ENCODE measurements at regions of chr1 and their contacts with region 1.

Region 1: GRCh38 chr1:91165033-91165654 is 143.3 kb upstream of the ZNF644 start:
- H3K4me3 ChIP-seq: no peak overlapping the region
- H3K27ac ChIP-seq: no peak overlapping the region
- H3K4me1 ChIP-seq: no peaks in the 10 kb centered on the region
- CTCF ChIP-seq: peak; percentile 76

Region 2: GRCh38 chr1:90114521-90115141 is 1050.5 kb before region 1 on chr1:
- CTCF ChIA-PET with region 1: interaction called, 13 read pairs
- POLR2A ChIA-PET with region 1: no interaction called
- H3K4me3 ChIP-seq: no peak overlapping the region
- H3K27ac ChIP-seq: no peak overlapping the region
- H3K4me1 ChIP-seq: no peaks in the 10 kb centered on the region
- CTCF ChIP-seq: peak; percentile 37

Region 3: GRCh38 chr1:90936061-90936460 is 229.1 kb before region 1 on chr1:
- CTCF ChIA-PET with region 1: interaction called, 11 read pairs
- POLR2A ChIA-PET with region 1: no interaction called
- H3K4me3 ChIP-seq: no peak overlapping the region
- H3K27ac ChIP-seq: no peak overlapping the region
- H3K4me1 ChIP-seq: no peaks in the 10 kb centered on the region
- CTCF ChIP-seq: no peak

Region 4: DNA sequence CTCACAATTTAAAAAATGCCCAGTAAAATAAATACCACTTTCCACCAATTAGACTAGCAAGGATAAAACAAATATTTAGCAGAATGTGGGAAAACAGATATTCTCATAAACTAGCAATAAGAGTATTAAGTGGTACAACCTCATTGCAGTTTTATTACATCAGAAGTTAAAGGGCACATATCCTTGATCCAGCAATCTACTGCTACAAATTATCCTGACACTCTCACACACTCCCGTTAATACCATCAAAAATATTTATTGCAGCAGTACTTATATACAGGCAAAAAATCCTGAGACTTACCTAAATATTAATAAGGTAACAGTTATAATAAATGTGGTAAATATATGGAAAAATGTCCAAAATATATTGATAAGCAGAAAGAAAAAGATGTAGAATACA is 187.6 kb before region 1 on chr1:
- CTCF ChIA-PET with region 1: interaction called, 20 read pairs
- POLR2A ChIA-PET with region 1: no interaction called
- H3K4me3 ChIP-seq: no peak overlapping the region
- H3K27ac ChIP-seq: no peak overlapping the region
- H3K4me1 ChIP-seq: no peaks in the 10 kb centered on the region
- CTCF ChIP-seq: no peak

Region 5: GRCh38 chr1:91141858-91142257 is 23.3 kb before region 1 on chr1:
- CTCF ChIA-PET with region 1: interaction called, 14 read pairs
- POLR2A ChIA-PET with region 1: no interaction called
- H3K4me3 ChIP-seq: no peak overlapping the region
- H3K27ac ChIP-seq: no peak overlapping the region
- H3K4me1 ChIP-seq: no peaks in the 10 kb centered on the region
- CTCF ChIP-seq: no peak

Region 6: GRCh38 chr1:91273875-91274274 is 108.7 kb after region 1 on chr1:
- CTCF ChIA-PET with region 1: interaction called, 187 read pairs
- POLR2A ChIA-PET with region 1: no interaction called
- H3K4me3 ChIP-seq: no peak overlapping the region
- H3K27ac ChIP-seq: no peak overlapping the region
- H3K4me1 ChIP-seq: no peaks in the 10 kb centered on the region
- CTCF ChIP-seq: no peak

Region 7: DNA sequence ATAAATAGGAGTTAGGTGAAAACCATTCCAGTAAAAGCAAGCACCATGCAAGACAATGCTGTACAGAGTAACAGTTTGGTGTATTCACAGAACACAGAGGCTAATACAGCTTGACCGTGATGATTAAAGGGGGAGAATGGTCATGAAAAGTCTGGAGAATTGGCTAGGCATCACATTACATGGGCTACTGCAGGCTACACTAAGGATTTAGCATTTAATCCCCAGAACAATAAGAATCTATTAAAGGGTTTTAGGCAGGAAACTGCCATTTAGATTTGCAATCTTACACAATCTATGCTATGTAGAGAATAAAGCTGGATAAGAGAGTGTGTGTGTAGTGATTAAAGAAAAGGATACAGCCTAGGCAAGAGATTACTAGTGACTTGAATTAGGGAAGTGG is 208.9 kb after region 1 on chr1:
- CTCF ChIA-PET with region 1: no interaction called
- POLR2A ChIA-PET with region 1: no interaction called
- H3K4me3 ChIP-seq: no peak overlapping the region
- H3K27ac ChIP-seq: no peak overlapping the region
- H3K4me1 ChIP-seq: no peaks in the 10 kb centered on the region
- CTCF ChIP-seq: no peak

Region 8: DNA sequence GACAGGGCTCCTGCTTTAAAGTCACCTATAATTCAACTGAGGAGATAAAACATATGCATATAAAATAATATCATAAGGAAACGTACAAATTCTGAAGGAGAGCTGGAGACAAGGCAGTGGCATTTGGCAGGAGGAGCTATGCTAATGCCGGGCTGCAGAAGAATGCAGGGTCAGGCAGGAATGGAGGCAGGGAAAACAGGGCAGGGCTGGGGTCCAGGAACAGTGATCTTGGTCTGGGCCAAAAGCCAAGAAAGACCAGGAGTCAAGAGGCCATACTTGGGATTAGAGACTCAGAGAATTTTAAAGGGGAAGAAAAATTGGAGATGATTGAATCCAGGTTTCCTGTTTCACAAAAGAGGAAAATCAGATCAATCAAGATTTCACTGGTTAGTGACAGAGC is 764.1 kb after region 1 on chr1:
- CTCF ChIA-PET with region 1: interaction called, 10 read pairs
- POLR2A ChIA-PET with region 1: no interaction called
- H3K4me3 ChIP-seq: no peak overlapping the region
- H3K27ac ChIP-seq: no peak overlapping the region
- H3K4me1 ChIP-seq: no peaks in the 10 kb centered on the region
- CTCF ChIP-seq: no peak